ENCODE measurements at regions of chr14 and their contacts with region 1.

Region 1: GRCh38 chr14:69715725-69716477 is 51.0 kb upstream of the SRSF5 start:
- DNase-seq: peak; percentile 76
- H3K4me3 ChIP-seq: no peak overlapping the region
- H3K27ac ChIP-seq: peak overlapping the region; percentile 96
- H3K4me1 ChIP-seq: peaks cover 38% of the 10 kb centered on the region
- H3K27me3 ChIP-seq: no peaks in the 10 kb centered on the region

Region 2: GRCh38 chr14:69606258-69607184 is 109.4 kb before region 1 on chr14:
- in situ Hi-C with region 1: loop called (anchors 5 kb)
- DNase-seq: no peak
- H3K4me3 ChIP-seq: no peak overlapping the region
- H3K27ac ChIP-seq: no peak overlapping the region
- H3K4me1 ChIP-seq: peaks cover 9% of the 10 kb centered on the region; the same call in 1 of the 2 replicates
- H3K27me3 ChIP-seq: no peaks in the 10 kb centered on the region

Region 3: GRCh38 chr14:70061108-70061507 is 345.2 kb after region 1 on chr14:
- in situ Hi-C with region 1: no loop called
- DNase-seq: no peak
- H3K4me3 ChIP-seq: no peak overlapping the region
- H3K27ac ChIP-seq: no peak overlapping the region
- H3K4me1 ChIP-seq: no peaks in the 10 kb centered on the region
- H3K27me3 ChIP-seq: peaks cover 14% of the 10 kb centered on the region

Measured in GM23248 (cell line).